Heart left ventricle (tissue), 16 donors: ENCODE measurements at regions of chr7 and their contacts with region 1.

Region 1: DNA sequence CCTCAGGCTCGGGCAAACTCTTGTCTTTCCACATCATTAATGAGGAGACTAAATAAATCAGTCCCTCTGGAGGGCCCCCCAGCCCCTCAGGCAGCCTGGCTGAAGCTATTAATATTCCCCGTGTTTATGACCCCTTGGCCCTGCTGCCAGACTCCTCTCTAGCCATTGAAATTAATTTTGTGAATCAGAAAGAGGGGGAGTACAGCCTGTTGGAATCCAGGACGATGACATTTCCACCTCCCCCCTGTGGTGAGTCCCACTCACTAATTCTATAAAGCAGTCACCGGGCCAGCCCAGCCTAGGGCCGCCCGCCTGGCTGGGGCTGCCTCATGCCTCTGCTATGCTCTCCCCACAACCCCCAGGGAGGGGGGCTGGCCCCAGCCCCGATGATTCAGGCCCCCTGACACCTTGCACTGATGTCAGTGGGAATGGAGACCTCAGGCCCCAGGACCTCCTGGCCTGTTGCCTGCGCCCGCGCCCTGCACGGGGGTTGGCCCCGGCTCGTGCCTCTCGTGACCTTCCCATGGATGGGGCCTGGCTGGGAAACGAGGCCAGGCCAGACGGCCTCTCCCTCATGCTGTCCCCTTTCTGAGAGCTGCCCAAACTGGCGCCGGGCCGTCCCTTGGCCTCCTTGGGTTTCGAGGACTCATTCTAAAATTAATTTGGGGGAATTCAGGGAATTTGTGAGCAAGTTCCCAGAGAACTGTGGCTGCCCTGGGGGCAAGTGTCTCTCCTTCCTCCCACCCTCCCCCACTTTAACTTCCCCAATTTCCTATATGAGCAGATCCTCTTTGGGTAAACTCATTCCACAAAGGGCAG is 34.0 kb downstream of the TMEM270 start:
- DNase-seq: peak; percentile 73 to 91 (median 88)
- ATAC-seq: peak; percentile 72 to 87 (median 75)
- H3K4me3 ChIP-seq: no peak overlapping the region
- H3K27ac ChIP-seq: peak overlapping the region in 10 of 12 donors; percentile 18 to 74 (median 44)
- H3K4me1 ChIP-seq: peaks cover 0 to 50% (median 15%) of the 10 kb centered on the region in 12 donors
- H3K27me3 ChIP-seq: no peaks in the 10 kb centered on the region
- CTCF ChIP-seq: peak in 1 of 12 donors; percentile 15
- POLR2A ChIP-seq: no peak

Region 2: GRCh38 chr7:73986158-73986631 is 91.3 kb after region 1 on chr7:
- intact Hi-C with region 1: loop called in 1 of 10 experiments (anchors 5 kb)
- DNase-seq: peak in 3 of 5 donors; percentile 80 to 83 (median 81)
- ATAC-seq: peak; percentile 63 to 80 (median 76)
- H3K4me3 ChIP-seq: no peak overlapping the region
- H3K27ac ChIP-seq: peak overlapping the region in 10 of 12 donors; percentile 24 to 77 (median 49)
- H3K4me1 ChIP-seq: peaks cover 0 to 18% (median 9%) of the 10 kb centered on the region in 12 donors
- H3K27me3 ChIP-seq: no peaks in the 10 kb centered on the region
- CTCF ChIP-seq: no peak
- POLR2A ChIP-seq: no peak